ENCODE measurements at regions of chr1 and their contacts with region 1.

Region 1: DNA sequence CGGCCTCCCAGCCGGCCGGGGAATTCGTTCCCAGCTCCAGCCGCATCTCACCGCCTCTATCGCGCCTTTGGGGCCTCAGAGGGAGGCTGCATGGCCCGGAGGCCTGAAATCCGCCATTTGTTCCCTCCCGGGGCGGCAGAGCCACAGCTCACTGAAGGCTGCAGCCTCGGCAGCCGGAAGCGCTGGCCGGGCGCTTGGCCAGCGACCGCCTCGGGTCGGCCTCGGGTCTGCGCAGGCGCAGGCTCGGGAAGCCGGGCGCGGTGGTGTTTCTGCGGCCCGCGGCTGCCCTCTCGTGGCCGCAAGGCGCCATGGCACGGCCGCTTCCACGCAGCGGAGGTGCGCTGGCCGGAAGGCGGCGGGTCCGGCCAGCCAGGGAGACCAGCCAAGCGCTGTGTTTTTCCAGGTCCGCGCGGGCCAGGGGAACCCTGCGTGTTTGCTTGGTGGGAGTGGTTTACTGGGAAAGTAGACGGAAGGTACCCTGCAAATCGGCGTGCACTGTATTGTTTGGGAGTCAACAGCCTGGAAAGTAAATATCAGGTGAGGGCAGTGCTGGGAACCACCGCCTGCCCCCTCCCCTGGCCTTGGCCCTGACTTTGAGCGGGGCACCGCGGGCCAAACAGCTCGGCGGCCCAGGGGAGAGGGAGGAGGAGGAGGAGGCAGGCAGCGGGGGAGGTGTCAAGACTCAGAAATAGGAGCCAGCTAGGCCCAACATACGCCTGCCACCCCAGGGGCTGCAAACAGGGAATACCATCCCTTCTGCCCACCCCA is 52.7 kb upstream of the CD34 start:
- DNase-seq: peak; percentile 90 to 98 (median 94)
- H3K4me3 ChIP-seq: peak overlapping the region; percentile 48
- H3K27ac ChIP-seq: peak overlapping the region; percentile 89 to 94
- H3K4me1 ChIP-seq: peaks cover 10% of the 10 kb centered on the region
- H3K27me3 ChIP-seq: no peaks in the 10 kb centered on the region
- CTCF ChIP-seq: peak; percentile 94 to 100 (median 100)
- EP300 ChIP-seq: peak; percentile 29
- POLR2A ChIP-seq: peak; percentile 76

Region 2: DNA sequence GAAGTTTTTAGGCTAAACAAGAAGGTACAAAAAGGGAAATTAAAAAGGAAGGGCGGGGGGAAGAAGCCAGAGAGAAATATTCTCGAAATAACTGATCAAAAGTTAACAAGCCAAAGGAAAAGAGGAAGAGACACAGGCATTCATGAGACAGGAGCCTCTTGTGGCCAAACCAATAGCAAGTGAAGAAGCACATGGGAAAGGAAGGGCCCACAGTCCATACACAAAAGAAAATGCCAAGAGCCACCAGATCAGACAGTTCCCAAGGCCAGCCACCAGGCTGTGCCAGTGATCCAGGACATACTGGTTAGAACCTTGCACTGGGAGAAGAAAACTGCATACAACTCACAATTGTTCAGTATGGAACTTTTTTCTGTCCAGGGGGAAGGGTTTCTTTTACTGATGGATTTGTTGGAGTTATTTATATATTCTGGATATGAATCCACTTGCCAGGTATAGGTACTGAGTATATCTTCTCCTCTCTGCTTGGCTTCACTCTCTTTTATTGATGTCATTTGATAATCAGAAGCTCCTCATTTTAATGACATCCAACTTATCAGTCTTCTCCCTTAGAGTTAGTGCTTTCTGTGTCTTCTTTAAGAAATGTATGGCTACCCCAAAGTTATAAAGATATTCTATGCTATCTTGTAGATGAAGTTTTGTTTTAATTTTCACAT is 135.0 kb before region 1 on chr1:
- intact Hi-C with region 1: loop called in 2 of 4 experiments (anchors 1 to 10 kb)
- DNase-seq: peak; percentile 59 to 76 (median 64)
- H3K4me3 ChIP-seq: no peak overlapping the region
- H3K27ac ChIP-seq: peak overlapping the region in 1 of 2 donors; percentile 8
- H3K4me1 ChIP-seq: peaks cover 24% of the 10 kb centered on the region
- H3K27me3 ChIP-seq: no peaks in the 10 kb centered on the region
- CTCF ChIP-seq: peak; percentile 36 to 79 (median 68)
- EP300 ChIP-seq: no peak
- POLR2A ChIP-seq: no peak

Region 3: GRCh38 chr1:207885129-207886032 is 78.2 kb before region 1 on chr1:
- intact Hi-C with region 1: loop called in 3 of 4 experiments (anchors 1 to 5 kb)
- DNase-seq: peak; percentile 84 to 91 (median 89)
- H3K4me3 ChIP-seq: no peak overlapping the region
- H3K27ac ChIP-seq: no peak overlapping the region
- H3K4me1 ChIP-seq: peaks cover 6% of the 10 kb centered on the region
- H3K27me3 ChIP-seq: no peaks in the 10 kb centered on the region
- CTCF ChIP-seq: peak; percentile 91 to 98 (median 95)
- EP300 ChIP-seq: no peak
- POLR2A ChIP-seq: no peak

Region 4: GRCh38 chr1:207897188-207897587 is 66.4 kb before region 1 on chr1:
- intact Hi-C with region 1: loop called in 1 of 4 experiments (anchors 5 kb)
- DNase-seq: no peak
- H3K4me3 ChIP-seq: no peak overlapping the region
- H3K27ac ChIP-seq: no peak overlapping the region
- H3K4me1 ChIP-seq: peaks cover 3% of the 10 kb centered on the region
- H3K27me3 ChIP-seq: no peaks in the 10 kb centered on the region
- CTCF ChIP-seq: peak; percentile 13 to 37 (median 15)
- EP300 ChIP-seq: no peak
- POLR2A ChIP-seq: no peak

Region 5: DNA sequence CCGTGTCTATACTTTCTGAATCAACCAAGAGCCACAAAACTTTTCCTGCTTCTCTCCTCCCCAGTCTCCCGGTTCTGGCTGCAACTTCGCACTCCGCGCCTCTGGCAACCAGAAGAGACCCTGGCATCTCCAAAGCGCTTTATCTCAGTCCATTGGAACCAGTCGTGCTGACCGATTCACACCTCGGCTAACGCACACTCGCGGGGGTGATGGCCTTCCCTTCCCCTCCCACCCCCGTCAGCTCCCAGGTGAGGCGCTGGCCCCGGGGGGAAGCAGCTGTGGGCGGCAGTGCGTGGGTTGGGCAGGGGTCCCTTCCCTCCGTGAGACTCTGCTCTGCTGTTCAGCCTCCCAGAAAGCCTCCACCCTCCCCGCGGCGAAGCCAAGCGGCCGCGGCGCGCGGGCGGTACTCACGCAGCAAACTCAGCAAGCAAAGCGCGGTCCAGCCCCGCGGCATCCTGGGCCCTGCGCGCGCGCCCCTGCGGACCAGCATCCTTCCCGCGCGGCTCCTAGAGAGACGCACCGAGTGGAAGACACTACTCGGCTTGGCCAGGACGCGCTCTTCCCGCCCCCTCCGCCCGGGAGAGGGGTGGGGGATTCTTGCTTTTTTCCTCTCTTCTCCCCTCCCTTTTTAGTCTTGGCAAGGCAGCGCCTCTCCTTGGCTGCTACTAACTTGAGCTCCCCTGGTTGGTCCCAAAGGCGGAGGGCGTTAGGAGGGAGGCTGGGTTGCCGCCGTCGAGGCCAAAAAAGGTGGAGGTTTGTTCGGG is 52.8 kb before region 1 on chr1 and contains the start of gene CD34:
- intact Hi-C with region 1: loop called in 1 of 4 experiments (anchors 2 kb)
- DNase-seq: peak; percentile 38 to 79 (median 58)
- H3K4me3 ChIP-seq: peak within 1 kb of the TSS; percentile 32
- H3K27ac ChIP-seq: peak within 1 kb of the TSS; percentile 22 to 67
- H3K4me1 ChIP-seq: peaks cover 7% of the 10 kb centered on the region
- H3K27me3 ChIP-seq: no peaks in the 10 kb centered on the region
- CTCF ChIP-seq: no peak
- EP300 ChIP-seq: no peak
- POLR2A ChIP-seq: no peak
- total RNA-seq, gene CD34: 12.6 to 42.1 (median 21.9) TPM

Measured in ovary (tissue), 10 donors.